ENCODE measurements at regions of chr1 and their contacts with region 1.

Region 1: DNA sequence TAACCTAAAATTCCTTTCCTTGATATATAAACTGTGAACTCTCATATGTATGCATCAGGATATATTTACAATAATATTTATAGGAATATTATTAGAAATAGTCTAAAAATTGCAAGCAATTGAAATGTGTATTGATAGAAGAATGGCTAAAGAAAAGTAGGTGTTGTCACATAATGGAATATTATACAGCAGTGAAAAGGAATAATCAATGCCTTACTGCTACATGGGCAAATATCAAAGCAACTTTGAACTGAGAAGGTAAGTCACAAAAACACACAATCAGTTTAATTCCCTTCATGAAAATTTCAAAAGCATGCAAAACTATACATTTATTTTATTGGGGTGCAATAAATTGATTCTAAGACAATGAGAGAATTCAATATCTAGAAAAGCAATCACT is 35.7 kb upstream of the CDC14A start:
- DNase-seq: no peak
- ATAC-seq: no peak

Region 2: GRCh38 chr1:99424087-99424486 is 892.5 kb before region 1 on chr1:
- intact Hi-C with region 1: loop called (anchors 5 kb)
- DNase-seq: no peak
- ATAC-seq: no peak

Region 3: DNA sequence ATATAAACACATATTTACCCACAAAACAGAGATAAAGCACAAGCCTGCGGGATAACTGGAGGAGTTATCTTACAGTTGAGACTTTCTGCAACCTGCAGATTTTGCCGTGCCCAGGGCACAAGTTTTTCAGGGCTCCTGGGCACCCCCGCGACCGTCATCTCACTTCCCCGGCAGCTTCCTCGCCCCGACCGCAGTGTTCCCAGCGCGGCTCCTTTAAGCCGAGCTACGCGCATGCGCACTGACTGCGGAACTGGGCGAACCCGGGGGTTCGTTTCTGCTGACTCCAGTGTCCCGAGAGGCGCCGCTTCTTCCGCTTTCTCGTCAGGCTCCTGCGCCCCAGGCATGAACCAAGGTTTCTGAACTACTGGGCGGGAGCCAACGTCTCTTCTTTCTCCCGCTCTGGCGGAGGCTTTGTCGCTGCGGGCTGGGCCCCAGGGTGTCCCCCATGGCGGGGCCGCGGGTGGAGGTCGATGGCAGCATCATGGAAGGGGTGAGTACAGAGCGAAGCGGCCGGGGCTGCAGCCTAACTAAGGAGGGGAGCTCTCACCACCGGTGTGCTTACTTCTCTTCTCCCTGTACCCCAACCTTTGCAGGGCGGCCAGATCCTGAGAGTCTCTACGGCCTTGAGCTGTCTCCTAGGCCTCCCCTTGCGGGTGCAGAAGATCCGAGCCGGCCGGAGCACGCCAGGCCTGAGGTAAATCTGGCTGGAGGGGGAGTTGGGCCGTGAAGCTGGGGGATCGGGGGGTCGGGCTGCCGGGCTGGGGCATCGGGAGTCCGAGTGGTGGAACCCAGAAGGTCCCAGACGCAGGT is 50.5 kb before region 1 on chr1 and contains the start of gene RTCA:
- intact Hi-C with region 1: no loop called
- DNase-seq: peak; percentile 98
- ATAC-seq: peak; percentile 100
- total RNA-seq, gene RTCA: 23.6 TPM

Region 4: DNA sequence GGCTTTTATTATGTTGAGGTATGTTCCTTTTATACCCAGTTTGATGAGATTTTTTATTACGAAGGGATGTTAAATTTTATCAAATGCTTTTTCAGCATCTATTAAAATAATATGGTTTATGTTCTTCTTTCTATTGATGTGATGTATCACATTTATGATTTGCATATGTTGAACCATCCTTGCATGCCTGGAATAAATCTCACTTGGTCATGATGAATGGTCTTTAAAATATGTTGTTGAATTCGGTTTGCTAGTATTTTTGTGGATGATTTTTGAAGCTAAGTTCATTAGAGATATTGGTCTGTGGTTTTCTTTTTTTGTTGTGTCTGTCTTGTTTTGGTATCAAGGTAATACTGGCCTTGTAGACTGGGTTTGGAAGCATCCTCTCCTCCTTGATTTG is 235.4 kb after region 1 on chr1:
- intact Hi-C with region 1: no loop called
- DNase-seq: no peak
- ATAC-seq: no peak